GM12878 (cell line): ENCODE measurements at regions of chr4 and their contacts with region 1.

Region 1: GRCh38 chr4:55358668-55359067 is 12.6 kb downstream of the SRD5A3 start:
- DNase-seq: peak; percentile 5
- ATAC-seq: peak; percentile 53
- H3K4me3 ChIP-seq: no peak overlapping the region
- H3K27ac ChIP-seq: peak overlapping the region; percentile 17
- H3K4me1 ChIP-seq: peaks cover 11% of the 10 kb centered on the region; the same call in 1 of the 2 replicates
- H3K27me3 ChIP-seq: no peaks in the 10 kb centered on the region
- CTCF ChIP-seq: no peak
- EP300 ChIP-seq: no peak
- POLR2A ChIP-seq: no peak
- RAD21 ChIP-seq: no peak

Region 2: DNA sequence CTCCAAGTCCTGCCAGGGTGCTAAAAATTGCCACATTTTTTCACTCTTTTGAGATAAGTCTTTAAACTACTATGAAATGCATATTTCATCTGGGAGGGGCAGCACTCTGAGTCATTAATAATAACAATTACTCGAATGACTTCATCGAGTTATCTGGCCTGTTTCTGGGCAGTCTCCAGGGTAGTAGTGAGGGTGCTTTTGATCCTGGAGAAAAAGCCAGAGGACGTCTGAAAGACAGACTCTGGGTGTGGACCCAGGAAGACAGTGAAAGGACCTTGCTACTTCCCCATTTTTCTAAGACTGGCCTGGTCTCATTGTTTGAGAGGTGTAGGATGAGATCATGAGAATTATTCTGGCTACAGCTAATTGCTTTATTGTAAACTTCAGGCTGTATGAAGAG is 54.9 kb before region 1 on chr4:
- CTCF ChIA-PET with region 1: no interaction called
- POLR2A ChIA-PET with region 1: no interaction called
- RAD21 ChIA-PET with region 1: no interaction called
- SMC1A ChIA-PET with region 1: no interaction called
- in situ Hi-C with region 1: no loop called
- intact Hi-C with region 1: no loop called
- DNase-seq: no peak
- ATAC-seq: no peak
- H3K4me3 ChIP-seq: no peak overlapping the region
- H3K27ac ChIP-seq: no peak overlapping the region
- H3K4me1 ChIP-seq: no peaks in the 10 kb centered on the region
- H3K27me3 ChIP-seq: no peaks in the 10 kb centered on the region
- CTCF ChIP-seq: no peak
- EP300 ChIP-seq: no peak
- POLR2A ChIP-seq: no peak
- RAD21 ChIP-seq: no peak

Region 3: GRCh38 chr4:55424791-55425190 is 66.1 kb after region 1 on chr4:
- CTCF ChIA-PET with region 1: no interaction called
- POLR2A ChIA-PET with region 1: no interaction called
- RAD21 ChIA-PET with region 1: no interaction called
- SMC1A ChIA-PET with region 1: no interaction called
- in situ Hi-C with region 1: no loop called
- intact Hi-C with region 1: loop called (anchors 2 kb)
- DNase-seq: no peak
- ATAC-seq: no peak
- H3K4me3 ChIP-seq: no peak overlapping the region
- H3K27ac ChIP-seq: no peak overlapping the region
- H3K4me1 ChIP-seq: no peaks in the 10 kb centered on the region
- H3K27me3 ChIP-seq: no peaks in the 10 kb centered on the region
- CTCF ChIP-seq: no peak
- EP300 ChIP-seq: no peak
- POLR2A ChIP-seq: no peak
- RAD21 ChIP-seq: no peak